Activated T-helper 1 cell treated with anti-CD3 and anti-CD28 coated beads, Interleukin-12 subunit alpha, Interleukin-12 subunit beta, Interleukin-2, Interleukin-4 antibody, amounts not matched to agents 30 ng/mL and 10 ng/mL and 1 ng/mL, durations not matched to agents 14 hours and 24 hours and 36 hours (primary cell): ENCODE measurements at regions of chr12 and their contacts with region 1.

Region 1: DNA sequence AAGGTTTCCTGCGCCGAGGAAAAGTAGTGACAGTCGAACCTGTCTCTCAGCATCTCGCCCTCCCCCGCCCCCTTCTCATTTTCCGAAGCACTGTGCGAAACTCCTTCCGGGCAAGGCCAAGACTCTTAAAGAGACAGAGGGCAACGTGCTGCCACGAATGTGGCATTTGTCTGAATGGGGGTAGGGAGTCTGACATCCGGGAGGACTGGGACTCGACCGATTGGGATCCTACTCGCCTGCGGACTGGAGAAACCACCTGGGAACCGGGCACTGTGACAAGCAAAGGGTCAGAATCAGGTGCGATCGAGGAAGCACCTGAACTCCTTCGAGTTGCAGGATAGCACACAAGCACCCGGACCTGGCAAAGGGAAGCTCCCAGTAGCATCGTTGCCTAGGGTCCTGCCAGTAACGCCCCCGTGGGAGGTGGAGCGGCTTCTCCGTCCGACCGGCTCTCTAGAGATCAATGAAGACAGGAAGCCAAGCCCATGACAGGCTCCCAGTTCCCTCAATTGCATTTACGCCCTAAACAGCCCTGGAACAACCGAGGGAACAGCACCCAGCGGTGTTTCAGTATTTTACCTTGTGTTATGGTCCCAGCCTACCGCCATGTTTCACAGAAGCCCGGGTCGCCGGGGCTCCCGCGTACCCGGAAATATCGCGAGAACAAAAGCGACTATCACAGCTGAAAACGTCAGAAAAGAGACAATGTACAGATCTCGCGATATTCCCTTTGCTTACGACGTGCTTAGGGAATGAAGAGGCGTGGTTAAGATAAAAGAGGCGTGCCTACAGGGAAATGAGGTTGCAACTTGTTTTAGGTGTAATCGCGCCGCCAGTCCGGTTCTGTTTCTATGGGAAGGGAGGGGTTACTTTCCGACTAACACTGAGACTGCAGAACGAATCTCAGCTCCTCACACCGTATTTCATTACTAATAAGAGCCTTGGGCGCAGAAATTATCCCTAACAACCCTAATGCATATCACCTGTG is at the start of gene ERGIC2:
- DNase-seq: peak; percentile 90
- H3K4me3 Mint-ChIP-seq: peak within 1 kb of the TSS; percentile 97
- H3K27ac Mint-ChIP-seq: peak within 1 kb of the TSS; percentile 94
- H3K4me1 Mint-ChIP-seq: peaks cover 31% of the 10 kb centered on the region
- H3K27me3 Mint-ChIP-seq: peaks cover 4% of the 10 kb centered on the region
- total RNA-seq, gene ERGIC2: 94.9 and 105 TPM in 2 replicates

Region 2: DNA sequence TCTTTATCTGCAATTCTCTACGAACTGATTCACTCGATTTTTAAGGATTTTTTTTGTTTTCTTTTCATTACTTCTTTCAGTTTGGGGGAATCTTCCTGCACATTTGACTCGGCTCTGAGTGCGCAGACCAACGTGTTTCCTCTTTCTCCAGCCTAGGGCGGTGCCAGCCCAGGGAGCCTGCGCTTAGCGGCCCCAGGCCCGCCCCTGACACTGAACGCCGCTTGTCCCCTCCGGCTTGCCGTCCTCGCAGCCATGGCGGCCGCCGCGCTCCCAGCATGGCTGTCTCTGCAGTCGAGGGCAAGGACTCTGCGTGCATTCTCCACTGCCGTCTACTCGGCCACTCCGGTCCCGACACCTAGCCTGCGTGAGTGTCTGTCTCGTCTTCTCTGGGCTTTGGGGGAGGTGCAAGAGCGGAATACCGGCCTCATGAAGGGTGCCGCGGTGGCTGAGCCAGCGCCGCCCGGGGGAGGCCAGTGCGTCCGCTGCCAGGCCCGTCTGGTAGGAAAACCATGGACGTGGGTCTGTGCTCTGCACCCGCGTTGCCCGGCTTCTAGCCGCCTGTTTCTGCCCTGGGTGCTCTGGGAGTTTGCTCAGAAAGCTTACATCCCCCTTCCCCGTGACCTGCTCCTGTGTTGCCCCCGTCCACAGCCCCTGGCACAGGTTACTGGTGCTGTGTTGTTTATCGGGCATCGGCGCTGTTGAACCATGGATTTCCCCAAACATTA is 1670.1 kb before region 1 on chr12 and contains the start of gene MRPS35:
- intact Hi-C with region 1: loop called (anchors 2 kb)
- DNase-seq: peak; percentile 89
- H3K4me3 Mint-ChIP-seq: peak within 1 kb of the TSS; percentile 97
- H3K27ac Mint-ChIP-seq: peak within 1 kb of the TSS; percentile 96
- H3K4me1 Mint-ChIP-seq: peaks cover 26% of the 10 kb centered on the region
- H3K27me3 Mint-ChIP-seq: peaks cover 10% of the 10 kb centered on the region
- total RNA-seq, gene MRPS35: 59.8 and 72.2 TPM in 2 replicates

Region 3: DNA sequence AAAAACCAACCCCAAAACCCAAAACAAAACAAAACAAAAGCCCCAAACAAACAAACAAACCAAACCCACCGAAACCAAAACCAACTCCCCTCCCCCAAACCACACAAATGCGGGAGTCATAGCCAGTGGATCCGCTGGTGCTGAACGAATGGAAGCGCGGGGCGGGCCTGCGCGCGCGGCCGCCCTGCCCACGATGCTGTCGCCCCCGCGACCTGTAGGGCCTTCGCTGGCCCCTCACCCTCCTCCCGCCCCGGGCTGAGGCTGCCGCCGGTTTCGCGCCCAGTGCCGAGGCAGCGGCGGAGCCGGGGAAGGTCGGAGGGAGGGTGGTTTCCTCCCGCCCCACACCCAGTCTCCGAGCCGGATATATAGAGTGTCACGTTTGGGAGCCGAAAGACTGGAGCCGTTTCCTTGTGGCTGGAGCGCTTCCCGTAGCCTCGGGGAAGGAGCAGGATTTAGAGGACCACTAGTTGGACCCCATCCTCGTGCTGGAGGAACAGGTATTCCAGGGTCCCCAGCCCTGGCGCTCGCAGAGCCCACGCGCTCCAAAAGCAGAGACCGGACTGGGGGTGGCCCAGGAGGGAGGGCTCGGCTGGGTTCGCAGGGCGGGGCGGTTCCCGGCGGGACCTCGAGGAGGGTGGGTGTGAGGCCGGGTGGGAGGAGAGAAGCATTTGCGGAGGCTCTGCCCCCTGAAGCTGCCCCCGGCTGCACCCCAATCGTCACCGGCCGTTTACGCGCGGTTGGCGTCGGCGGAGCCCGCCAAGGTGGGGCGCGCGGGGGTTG is 231.7 kb before region 1 on chr12 and contains the start of gene FAR2:
- intact Hi-C with region 1: loop called (anchors 5 kb)
- DNase-seq: peak; percentile 37
- H3K4me3 Mint-ChIP-seq: peak within 1 kb of the TSS; percentile 91
- H3K27ac Mint-ChIP-seq: peak within 1 kb of the TSS; percentile 93
- H3K4me1 Mint-ChIP-seq: peaks cover 17% of the 10 kb centered on the region
- H3K27me3 Mint-ChIP-seq: peaks cover 31% of the 10 kb centered on the region
- total RNA-seq, gene FAR2: 5.2 and 5.4 TPM in 2 replicates

Region 4: DNA sequence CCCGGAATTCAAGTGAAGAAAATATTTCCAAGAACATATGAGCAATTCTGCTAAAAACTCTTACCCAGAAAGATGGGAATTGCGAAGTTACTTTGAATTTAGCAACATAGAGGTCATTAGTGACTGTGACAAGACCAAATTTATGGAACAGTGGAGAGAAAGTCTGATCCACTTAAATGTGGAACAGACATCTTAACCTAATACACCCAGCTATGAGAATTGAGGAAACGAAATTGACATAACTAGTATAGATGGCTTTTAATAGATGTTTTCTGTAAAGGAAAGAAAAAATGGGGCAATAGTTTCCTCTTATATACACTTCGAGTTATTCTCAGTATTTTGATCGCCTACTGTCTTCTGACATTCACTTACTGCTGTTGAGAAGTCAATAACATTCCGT is 112.1 kb after region 1 on chr12:
- intact Hi-C with region 1: no loop called
- DNase-seq: no peak
- H3K4me3 Mint-ChIP-seq: no peak overlapping the region
- H3K27ac Mint-ChIP-seq: no peak overlapping the region
- H3K4me1 Mint-ChIP-seq: no peaks in the 10 kb centered on the region
- H3K27me3 Mint-ChIP-seq: no peaks in the 10 kb centered on the region

Region 5: GRCh38 chr12:30695199-30696103 is 1314.6 kb after region 1 on chr12 and contains the start of gene IPO8:
- intact Hi-C with region 1: loop called (anchors 1 kb)
- DNase-seq: peak; percentile 80
- H3K4me3 Mint-ChIP-seq: peak within 1 kb of the TSS; percentile 96
- H3K27ac Mint-ChIP-seq: peak within 1 kb of the TSS; percentile 94
- H3K4me1 Mint-ChIP-seq: peaks cover 40% of the 10 kb centered on the region
- H3K27me3 Mint-ChIP-seq: peaks cover 6% of the 10 kb centered on the region
- total RNA-seq, gene IPO8: 41.8 and 50.5 TPM in 2 replicates

Region 6: DNA sequence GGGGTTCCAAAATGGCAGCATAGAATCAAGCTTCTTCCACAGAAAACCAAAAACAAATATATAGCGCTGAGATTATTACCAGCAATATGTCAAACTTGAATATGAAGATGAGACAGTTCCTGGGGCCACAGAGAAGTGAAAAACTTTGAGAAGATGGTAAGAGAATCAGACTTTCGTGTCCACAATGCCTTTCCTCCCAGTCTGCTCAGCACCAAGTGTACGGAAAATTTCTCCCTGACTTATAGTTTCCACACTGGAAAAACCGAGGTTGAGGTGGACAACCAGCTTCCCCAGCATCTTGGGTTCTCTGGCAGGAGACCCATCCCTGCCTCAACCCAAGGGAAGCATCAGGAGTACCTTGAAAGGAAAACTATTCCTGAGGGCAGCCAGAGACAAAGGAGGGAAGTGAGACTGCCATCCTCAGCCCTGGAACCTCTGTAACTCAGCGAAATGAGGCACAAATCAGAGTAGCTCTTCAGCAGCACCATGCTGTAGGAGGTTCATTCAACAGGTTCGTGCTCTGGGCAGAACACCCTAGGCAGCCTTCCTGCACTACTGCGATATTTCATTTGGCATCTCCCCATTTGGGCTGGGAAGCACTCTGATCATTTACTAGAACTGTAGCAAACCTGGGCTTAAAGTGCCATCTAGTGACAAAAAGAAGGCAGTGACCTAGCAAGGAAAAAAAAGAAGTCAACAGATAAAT is 1426.3 kb after region 1 on chr12:
- intact Hi-C with region 1: loop called (anchors 5 kb)
- DNase-seq: peak; percentile 4
- H3K4me3 Mint-ChIP-seq: no peak overlapping the region
- H3K27ac Mint-ChIP-seq: no peak overlapping the region
- H3K4me1 Mint-ChIP-seq: no peaks in the 10 kb centered on the region
- H3K27me3 Mint-ChIP-seq: peaks cover 10% of the 10 kb centered on the region